ENCODE measurements at regions of chr4 and their contacts with region 1.

Region 1: DNA sequence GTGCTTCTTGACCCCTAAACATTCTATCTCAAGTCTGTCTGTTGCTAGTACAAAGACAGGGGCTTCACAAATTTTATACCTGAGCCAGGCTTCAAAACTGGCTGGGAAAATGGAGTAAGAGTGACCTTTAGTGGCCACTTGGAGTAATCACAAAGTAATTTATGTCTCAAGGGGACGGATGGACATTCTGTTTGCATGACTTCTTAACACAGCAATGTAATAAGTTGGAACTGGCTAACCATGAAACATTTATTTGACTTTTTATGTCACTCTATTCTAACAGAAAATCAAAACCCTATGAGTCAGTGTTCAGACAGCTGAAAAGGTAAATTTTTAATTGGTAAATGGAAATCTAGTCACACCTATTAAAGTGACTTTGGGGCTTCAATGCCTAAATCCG is 600.6 kb downstream of the ANKRD50 start:
- DNase-seq: peak; percentile 74
- H3K4me3 ChIP-seq: no peak overlapping the region
- H3K27ac ChIP-seq: no peak overlapping the region
- H3K4me1 ChIP-seq: peaks cover 5% of the 10 kb centered on the region
- H3K27me3 ChIP-seq: no peaks in the 10 kb centered on the region
- CTCF ChIP-seq: peak; percentile 68

Region 2: GRCh38 chr4:123102897-123103471 is 1008.9 kb before region 1 on chr4:
- CTCF ChIA-PET with region 1: no interaction called
- POLR2A ChIA-PET with region 1: no interaction called
- intact Hi-C with region 1: loop called (anchors 2 kb)
- DNase-seq: peak; percentile 69
- H3K4me3 ChIP-seq: no peak overlapping the region
- H3K27ac ChIP-seq: no peak overlapping the region
- H3K4me1 ChIP-seq: peaks cover 18% of the 10 kb centered on the region
- H3K27me3 ChIP-seq: no peaks in the 10 kb centered on the region
- CTCF ChIP-seq: peak; percentile 82

Region 3: DNA sequence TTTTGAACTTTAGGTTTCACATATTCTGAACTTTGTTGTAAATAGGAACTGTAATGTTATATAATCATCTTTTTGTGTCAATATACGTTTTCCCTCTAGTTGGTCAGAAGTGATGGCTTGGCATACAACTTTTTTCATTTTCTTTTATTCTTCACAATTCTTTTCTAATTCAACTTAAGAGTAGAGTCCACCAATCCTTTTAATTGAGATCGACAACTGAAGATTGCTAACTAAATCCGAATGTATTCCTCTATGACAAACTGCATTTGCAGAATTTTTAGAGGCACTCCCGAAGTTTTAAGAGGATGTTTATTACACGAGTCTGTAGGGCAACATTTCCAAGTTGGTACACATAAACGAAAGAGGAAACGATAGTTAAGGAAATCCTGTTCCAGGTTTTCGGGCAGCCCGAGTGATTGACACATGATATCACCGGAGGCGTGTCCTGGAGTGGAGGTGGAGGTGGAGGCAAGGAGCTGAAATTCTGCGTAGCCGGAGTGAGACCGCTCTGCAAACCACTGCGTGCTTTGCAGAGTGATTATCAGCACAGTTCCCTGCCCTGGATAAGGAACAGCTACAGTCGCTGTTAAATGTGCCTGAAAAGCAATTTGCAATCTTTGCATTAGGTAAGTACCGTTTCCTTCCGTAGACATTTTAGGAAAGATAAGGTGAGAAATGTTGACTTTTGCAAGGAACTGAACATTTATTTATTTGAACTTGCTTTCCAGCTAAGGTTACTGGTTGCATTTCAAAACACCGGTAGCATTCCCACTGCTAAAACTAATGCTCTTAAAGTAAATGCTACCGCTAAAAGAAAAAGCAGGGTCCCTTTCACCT is 715.4 kb before region 1 on chr4 and contains the start of gene SPRY1:
- CTCF ChIA-PET with region 1: no interaction called
- POLR2A ChIA-PET with region 1: no interaction called
- intact Hi-C with region 1: loop called (anchors 5 kb)
- DNase-seq: peak; percentile 96
- H3K4me3 ChIP-seq: peak within 1 kb of the TSS; percentile 76
- H3K27ac ChIP-seq: peak within 1 kb of the TSS; percentile 36
- H3K4me1 ChIP-seq: peaks cover 6% of the 10 kb centered on the region
- H3K27me3 ChIP-seq: no peaks in the 10 kb centered on the region
- CTCF ChIP-seq: no peak
- total RNA-seq, gene SPRY1: 6.0 and 6.8 TPM in 2 replicates

Region 4: DNA sequence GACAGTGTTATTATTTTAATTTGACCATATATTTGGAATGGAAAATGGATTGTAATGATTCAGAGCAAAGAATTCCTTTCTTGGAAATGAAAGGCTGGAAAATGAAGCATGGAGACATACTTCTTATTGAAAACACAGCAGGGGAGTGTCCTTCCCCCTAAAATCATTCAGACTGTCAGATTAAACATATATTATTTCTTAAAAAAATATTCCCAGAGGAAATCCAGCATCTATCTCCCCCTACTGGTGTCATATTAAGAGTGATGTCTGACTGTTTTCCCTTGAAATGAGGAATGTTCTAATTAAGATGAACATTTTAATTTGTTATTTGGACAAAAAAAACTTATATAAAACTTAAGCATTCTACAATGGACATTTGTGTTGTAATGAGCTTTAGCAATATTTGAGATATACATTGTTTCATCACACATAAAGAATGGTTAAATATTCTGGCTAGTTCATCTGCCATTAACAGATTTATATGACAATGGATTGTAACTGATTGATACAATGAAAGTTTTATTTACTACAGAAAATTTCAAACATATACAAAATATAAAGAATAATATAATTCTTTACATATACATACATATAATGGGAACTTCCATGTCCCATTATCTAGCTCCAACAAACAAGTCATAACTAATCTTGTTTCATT is 450.7 kb before region 1 on chr4:
- CTCF ChIA-PET with region 1: no interaction called
- POLR2A ChIA-PET with region 1: no interaction called
- intact Hi-C with region 1: loop called (anchors 5 kb)
- DNase-seq: peak; percentile 46
- H3K4me3 ChIP-seq: no peak overlapping the region
- H3K27ac ChIP-seq: no peak overlapping the region
- H3K4me1 ChIP-seq: peaks cover 7% of the 10 kb centered on the region
- H3K27me3 ChIP-seq: no peaks in the 10 kb centered on the region
- CTCF ChIP-seq: peak; percentile 68

Region 5: DNA sequence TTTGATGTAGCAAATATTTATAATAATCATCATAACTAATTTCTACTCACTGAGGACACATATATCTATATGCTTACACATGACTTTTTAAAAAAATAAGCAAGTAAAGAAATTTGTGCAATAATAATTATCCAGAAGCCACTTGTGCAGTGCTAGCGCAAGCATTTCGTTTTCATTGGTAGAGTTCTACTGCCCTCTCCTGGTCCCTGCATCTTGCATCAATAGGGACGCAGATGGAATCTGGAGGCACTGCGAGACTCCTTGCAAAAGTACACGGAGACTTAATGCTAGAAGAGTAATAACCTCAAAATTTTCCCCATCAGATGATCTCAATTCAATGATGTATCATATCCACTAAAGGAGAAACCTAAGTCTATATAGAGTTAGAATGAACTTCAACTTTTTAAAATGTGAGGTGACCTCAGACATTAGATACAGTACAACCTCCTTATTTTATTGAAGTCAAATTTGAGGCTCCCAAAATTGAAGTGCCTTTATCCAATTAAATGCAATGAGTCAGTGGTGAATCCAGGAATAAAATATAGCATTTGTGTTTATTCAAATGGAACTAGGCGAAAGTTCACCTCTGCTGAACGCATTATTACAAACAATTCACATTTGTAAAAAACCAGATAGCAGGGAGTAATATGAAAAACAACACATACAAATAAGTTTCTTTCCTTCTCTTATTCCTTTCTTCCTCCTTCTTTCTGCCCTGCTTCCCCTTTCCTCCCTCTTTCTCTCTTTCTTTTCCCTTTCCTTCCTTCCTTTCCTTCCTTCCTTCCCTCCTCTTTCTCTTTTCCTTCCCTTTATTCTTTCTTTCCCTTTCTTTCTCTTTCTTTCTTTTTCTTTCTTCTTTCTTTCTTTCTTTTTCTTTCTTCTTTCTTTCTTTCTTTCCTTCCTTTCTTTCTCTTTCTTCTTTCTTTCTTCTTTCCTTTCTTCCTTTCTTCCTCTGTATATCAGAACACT is 150.6 kb after region 1 on chr4:
- CTCF ChIA-PET with region 1: no interaction called
- POLR2A ChIA-PET with region 1: no interaction called
- intact Hi-C with region 1: loop called (anchors 5 kb)
- DNase-seq: peak; percentile 91
- H3K4me3 ChIP-seq: no peak overlapping the region
- H3K27ac ChIP-seq: no peak overlapping the region
- H3K4me1 ChIP-seq: no peaks in the 10 kb centered on the region
- H3K27me3 ChIP-seq: no peaks in the 10 kb centered on the region
- CTCF ChIP-seq: peak; percentile 92

Measured in A673 (cell line).